ENCODE measurements at regions of chr18 and their contacts with region 1.

Region 1: GRCh38 chr18:24514439-24514838 is 54.0 kb downstream of the HRH4 start:
- DNase-seq: no peak
- ATAC-seq: peak; percentile 49
- H3K4me3 Mint-ChIP-seq: no peak overlapping the region
- H3K27ac Mint-ChIP-seq: no peak overlapping the region
- H3K4me1 Mint-ChIP-seq: no peaks in the 10 kb centered on the region
- H3K27me3 Mint-ChIP-seq: no peaks in the 10 kb centered on the region

Region 2: GRCh38 chr18:24504401-24504800 is 10.0 kb before region 1 on chr18:
- CTCF ChIA-PET with region 1: interaction called, 13 read pairs
- POLR2A ChIA-PET with region 1: interaction called, 3 read pairs
- DNase-seq: no peak
- ATAC-seq: no peak
- H3K4me3 Mint-ChIP-seq: no peak overlapping the region
- H3K27ac Mint-ChIP-seq: no peak overlapping the region
- H3K4me1 Mint-ChIP-seq: no peaks in the 10 kb centered on the region
- H3K27me3 Mint-ChIP-seq: no peaks in the 10 kb centered on the region

Region 3: GRCh38 chr18:24553571-24554285 is 39.3 kb after region 1 on chr18:
- CTCF ChIA-PET with region 1: no interaction called
- POLR2A ChIA-PET with region 1: no interaction called
- DNase-seq: no peak
- ATAC-seq: no peak
- H3K4me3 Mint-ChIP-seq: no peak overlapping the region
- H3K27ac Mint-ChIP-seq: no peak overlapping the region
- H3K4me1 Mint-ChIP-seq: peaks cover 2% of the 10 kb centered on the region
- H3K27me3 Mint-ChIP-seq: peaks cover 7% of the 10 kb centered on the region

Region 4: DNA sequence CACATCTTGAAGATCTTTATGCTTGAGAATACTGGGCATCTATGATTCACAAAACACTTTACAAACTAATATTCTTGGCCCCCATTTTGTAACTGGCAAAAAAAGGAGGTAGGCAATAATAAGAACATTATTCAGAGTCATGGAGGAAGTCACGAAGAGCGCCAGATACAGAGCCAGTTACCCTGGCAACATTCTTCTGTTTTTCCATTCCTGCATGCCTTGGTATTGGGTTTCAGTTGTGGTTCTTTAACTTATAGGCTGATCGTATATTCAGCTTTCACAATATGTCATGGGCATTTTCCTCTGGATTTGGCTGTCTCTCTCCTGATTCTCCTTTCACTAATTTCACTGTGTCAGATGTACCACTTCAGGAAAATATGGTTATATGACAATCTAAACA is 180.7 kb after region 1 on chr18:
- CTCF ChIA-PET with region 1: no interaction called
- POLR2A ChIA-PET with region 1: no interaction called
- DNase-seq: no peak
- ATAC-seq: no peak
- H3K4me3 Mint-ChIP-seq: no peak overlapping the region
- H3K27ac Mint-ChIP-seq: no peak overlapping the region
- H3K4me1 Mint-ChIP-seq: no peaks in the 10 kb centered on the region
- H3K27me3 Mint-ChIP-seq: peaks cover 3% of the 10 kb centered on the region